ENCODE measurements at regions of chr4 and their contacts with region 1.

Region 1: GRCh38 chr4:87465739-87466366 is 43.5 kb downstream of the NUDT9 start:
- DNase-seq: peak in 1 of 3 donors; percentile 25
- ATAC-seq: peak; percentile 36 to 57
- H3K4me3 ChIP-seq: no peak overlapping the region
- H3K27ac ChIP-seq: no peak overlapping the region
- H3K4me1 ChIP-seq: peaks cover 3% of the 10 kb centered on the region
- H3K27me3 ChIP-seq: no peaks in the 10 kb centered on the region

Region 2: DNA sequence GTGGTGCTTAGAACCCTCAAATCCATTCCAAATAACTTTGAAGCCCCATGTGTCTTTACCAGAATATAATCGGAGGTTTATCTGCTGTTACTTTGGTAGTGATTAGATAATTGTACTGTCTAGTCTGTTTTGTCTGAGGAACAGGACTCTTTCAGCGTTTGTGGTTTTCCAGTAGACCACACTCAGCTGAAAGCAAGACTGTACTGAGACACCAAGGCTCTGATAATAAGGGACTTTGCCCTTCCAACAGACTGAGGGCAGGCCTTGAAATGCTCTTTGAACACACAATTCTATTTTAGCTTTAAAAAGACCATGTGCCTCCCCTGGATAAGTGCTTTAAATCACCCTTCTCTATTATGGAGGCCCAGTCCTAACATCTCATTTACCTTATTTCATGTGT is 321.5 kb before region 1 on chr4:
- intact Hi-C with region 1: no loop called
- DNase-seq: no peak
- ATAC-seq: no peak
- H3K4me3 ChIP-seq: no peak overlapping the region
- H3K27ac ChIP-seq: no peak overlapping the region
- H3K4me1 ChIP-seq: no peaks in the 10 kb centered on the region
- H3K27me3 ChIP-seq: no peaks in the 10 kb centered on the region

Region 3: DNA sequence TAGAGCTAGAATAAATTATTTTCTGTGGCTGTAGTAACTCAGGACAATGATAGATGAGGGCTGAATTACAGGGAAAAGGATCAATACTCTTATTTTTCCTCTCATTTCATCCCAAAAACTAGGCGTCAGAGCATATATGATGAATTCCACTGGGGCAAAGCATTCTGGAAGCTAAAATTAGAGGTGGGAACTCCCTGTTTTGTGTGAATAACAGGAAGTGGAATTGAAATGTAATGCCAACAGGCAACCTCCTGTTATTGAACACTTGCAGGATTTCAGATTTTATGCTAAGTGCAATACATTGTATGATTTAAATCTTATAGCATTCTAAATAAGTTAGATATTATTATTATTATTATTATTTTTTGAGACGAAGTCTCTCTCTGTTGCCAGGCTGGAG is 95.8 kb before region 1 on chr4:
- intact Hi-C with region 1: loop called in 3 of 4 experiments (anchors 5 to 10 kb)
- DNase-seq: no peak
- ATAC-seq: no peak
- H3K4me3 ChIP-seq: no peak overlapping the region
- H3K27ac ChIP-seq: no peak overlapping the region
- H3K4me1 ChIP-seq: no peaks in the 10 kb centered on the region
- H3K27me3 ChIP-seq: no peaks in the 10 kb centered on the region

Region 4: GRCh38 chr4:87375719-87376291 is 90.0 kb before region 1 on chr4:
- intact Hi-C with region 1: loop called (anchors 5 to 10 kb)
- DNase-seq: peak in 2 of 3 donors; percentile 30 to 72
- ATAC-seq: peak; percentile 78 to 84
- H3K4me3 ChIP-seq: no peak overlapping the region
- H3K27ac ChIP-seq: no peak overlapping the region
- H3K4me1 ChIP-seq: no peaks in the 10 kb centered on the region
- H3K27me3 ChIP-seq: no peaks in the 10 kb centered on the region

Region 5: DNA sequence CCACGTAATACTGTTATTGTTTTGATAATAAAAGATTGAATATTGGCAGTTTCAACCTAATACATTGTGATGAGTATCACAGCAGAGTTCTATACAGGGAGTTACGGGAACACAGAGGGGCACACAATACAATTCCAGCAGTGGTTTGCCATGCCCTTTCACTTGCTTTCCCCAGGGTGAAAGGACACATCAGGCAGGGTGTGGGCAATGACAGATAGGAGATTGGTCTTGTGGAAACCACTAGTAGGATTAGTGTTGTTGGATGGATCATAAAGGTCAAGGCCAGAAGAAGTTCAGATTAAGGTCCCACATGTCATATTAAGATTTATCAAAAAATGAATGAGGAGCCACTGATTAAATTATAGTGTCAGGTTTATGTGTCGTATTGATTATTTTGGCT is 82.9 kb before region 1 on chr4:
- intact Hi-C with region 1: loop called in 3 of 4 experiments (anchors 5 to 10 kb)
- DNase-seq: no peak
- ATAC-seq: no peak
- H3K4me3 ChIP-seq: no peak overlapping the region
- H3K27ac ChIP-seq: no peak overlapping the region
- H3K4me1 ChIP-seq: no peaks in the 10 kb centered on the region
- H3K27me3 ChIP-seq: no peaks in the 10 kb centered on the region